Naive thymus-derived CD4-positive, alpha-beta T cell (primary cell): ENCODE measurements at regions of chr9 and their contacts with region 1.

Region 1: DNA sequence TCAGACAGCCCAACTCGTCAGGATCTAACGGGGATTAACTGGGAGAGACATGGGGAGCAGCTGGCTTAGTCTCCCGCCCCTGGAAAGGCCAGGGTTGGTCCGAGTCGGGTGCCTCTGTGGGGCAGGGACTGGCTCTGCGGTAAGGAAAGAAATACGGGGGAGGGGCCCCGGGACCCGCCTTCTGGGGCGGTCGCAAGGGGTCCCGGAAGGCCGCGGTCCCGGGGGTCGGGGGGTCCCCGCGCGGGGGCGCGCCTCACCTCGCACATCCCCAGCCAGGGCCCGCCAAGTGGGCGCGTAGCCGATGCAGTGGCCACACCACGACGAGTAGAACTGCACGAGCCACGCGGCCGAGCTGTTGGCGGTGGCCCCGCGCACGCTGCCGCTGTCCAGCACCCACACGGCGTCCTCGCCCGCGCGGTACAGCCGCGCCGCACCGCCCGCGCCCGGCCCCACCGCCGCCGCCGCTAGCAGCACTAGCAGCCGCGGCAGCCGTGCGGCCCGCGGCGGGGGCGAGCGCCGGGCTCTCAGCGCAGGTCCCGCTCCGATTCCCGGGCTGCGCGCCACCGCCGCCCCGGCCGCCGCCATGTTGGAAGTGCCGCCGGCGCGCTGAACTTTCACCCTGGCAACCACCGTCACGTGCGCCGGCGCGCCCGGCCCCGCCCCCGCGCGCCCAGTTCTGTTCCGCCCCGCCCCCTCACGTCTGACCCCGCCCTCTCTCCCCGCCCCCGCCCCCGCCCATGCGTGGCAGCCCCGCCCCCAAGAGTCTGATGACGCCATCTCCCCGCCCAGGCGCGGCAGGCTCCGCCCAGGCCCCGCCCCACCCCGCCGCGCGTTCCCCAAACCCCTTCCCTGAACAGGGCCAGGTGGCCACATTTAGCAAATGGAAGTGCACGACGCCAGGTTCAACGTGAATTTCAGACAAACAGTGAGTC is at the start of gene QSOX2:
- DNase-seq: peak; percentile 76 to 89 (median 82)
- ATAC-seq: peak; percentile 94
- H3K4me3 ChIP-seq: peak within 1 kb of the TSS; percentile 65
- H3K4me3 Mint-ChIP-seq: peak within 1 kb of the TSS; percentile 89 to 100 (median 94)
- H3K27ac ChIP-seq: peak within 1 kb of the TSS; percentile 65
- H3K27ac Mint-ChIP-seq: peak within 1 kb of the TSS; percentile 83 to 93 (median 88)
- H3K4me1 ChIP-seq: peaks cover 22 to 29% of the 10 kb centered on the region in 2 donors
- H3K4me1 Mint-ChIP-seq: peaks cover 25 to 45% (median 36%) of the 10 kb centered on the region in 7 donors
- H3K27me3 ChIP-seq: no peaks in the 10 kb centered on the region
- H3K27me3 Mint-ChIP-seq: peaks cover 0 to 2% (median 0%) of the 10 kb centered on the region in 5 donors
- total RNA-seq, gene QSOX2: 11.5 to 15.9 (median 12.0) TPM

Region 2: GRCh38 chr9:135907431-135908092 is 337.9 kb before region 1 on chr9 and contains the start of gene CAMSAP1:
- CTCF ChIA-PET with region 1: no interaction called
- POLR2A ChIA-PET with region 1: no interaction called
- intact Hi-C with region 1: loop called in 1 of 2 experiments (anchors 1 kb)
- DNase-seq: peak; percentile 89 to 97 (median 93)
- ATAC-seq: peak; percentile 91
- H3K4me3 ChIP-seq: peak within 1 kb of the TSS; percentile 69
- H3K4me3 Mint-ChIP-seq: peak within 1 kb of the TSS; percentile 85 to 94 (median 90)
- H3K27ac ChIP-seq: peak within 1 kb of the TSS; percentile 89
- H3K27ac Mint-ChIP-seq: peak within 1 kb of the TSS; percentile 68 to 92 (median 83)
- H3K4me1 ChIP-seq: peaks cover 21% of the 10 kb centered on the region in 2 donors
- H3K4me1 Mint-ChIP-seq: peaks cover 33 to 74% (median 63%) of the 10 kb centered on the region in 7 donors
- H3K27me3 ChIP-seq: no peaks in the 10 kb centered on the region
- H3K27me3 Mint-ChIP-seq: no peaks in the 10 kb centered on the region
- total RNA-seq, gene CAMSAP1: 16.4 to 34.3 (median 23.6) TPM

Region 3: GRCh38 chr9:135992486-135993408 is 252.7 kb before region 1 on chr9:
- CTCF ChIA-PET with region 1: no interaction called
- POLR2A ChIA-PET with region 1: no interaction called
- intact Hi-C with region 1: loop called in 1 of 2 experiments (anchors 5 kb)
- DNase-seq: peak in 6 of 9 donors; percentile 19 to 35 (median 24)
- ATAC-seq: peak; percentile 73
- H3K4me3 ChIP-seq: no peak overlapping the region
- H3K4me3 Mint-ChIP-seq: peak overlapping the region in 8 of 10 donors; percentile 11 to 68 (median 47)
- H3K27ac ChIP-seq: peak overlapping the region; percentile 35
- H3K27ac Mint-ChIP-seq: peak overlapping the region in 4 of 9 donors; percentile 52 to 82 (median 58)
- H3K4me1 ChIP-seq: peaks cover 14 to 17% of the 10 kb centered on the region in 2 donors
- H3K4me1 Mint-ChIP-seq: peaks cover 4 to 34% (median 12%) of the 10 kb centered on the region in 7 donors
- H3K27me3 ChIP-seq: no peaks in the 10 kb centered on the region
- H3K27me3 Mint-ChIP-seq: no peaks in the 10 kb centered on the region

Region 4: GRCh38 chr9:136051517-136052432 is 193.7 kb before region 1 on chr9:
- CTCF ChIA-PET with region 1: no interaction called
- POLR2A ChIA-PET with region 1: no interaction called
- intact Hi-C with region 1: no loop called
- DNase-seq: no peak
- ATAC-seq: peak; percentile 61
- H3K4me3 ChIP-seq: peak overlapping the region; percentile 50
- H3K4me3 Mint-ChIP-seq: peak overlapping the region in 9 of 10 donors; percentile 41 to 82 (median 76)
- H3K27ac ChIP-seq: no peak overlapping the region
- H3K27ac Mint-ChIP-seq: no peak overlapping the region
- H3K4me1 ChIP-seq: peaks cover 9% of the 10 kb centered on the region in 2 donors
- H3K4me1 Mint-ChIP-seq: peaks cover 3 to 25% (median 10%) of the 10 kb centered on the region in 7 donors
- H3K27me3 ChIP-seq: peaks cover 0 to 6% of the 10 kb centered on the region in 2 donors
- H3K27me3 Mint-ChIP-seq: peaks cover 0 to 14% (median 4%) of the 10 kb centered on the region in 5 donors

Region 5: GRCh38 chr9:136118320-136119060 is 127.0 kb before region 1 on chr9 and contains the start of gene TMEM250:
- CTCF ChIA-PET with region 1: no interaction called
- POLR2A ChIA-PET with region 1: no interaction called
- intact Hi-C with region 1: loop called in 1 of 2 experiments (anchors 2 kb)
- DNase-seq: peak; percentile 94 to 98 (median 97)
- ATAC-seq: peak; percentile 94
- H3K4me3 ChIP-seq: peak within 1 kb of the TSS; percentile 81
- H3K4me3 Mint-ChIP-seq: peak within 1 kb of the TSS; percentile 73 to 87 (median 84)
- H3K27ac ChIP-seq: peak within 1 kb of the TSS; percentile 87
- H3K27ac Mint-ChIP-seq: peak within 1 kb of the TSS; percentile 13 to 91 (median 84)
- H3K4me1 ChIP-seq: peaks cover 14 to 33% of the 10 kb centered on the region in 2 donors
- H3K4me1 Mint-ChIP-seq: peaks cover 3 to 26% (median 11%) of the 10 kb centered on the region in 7 donors
- H3K27me3 ChIP-seq: no peaks in the 10 kb centered on the region
- H3K27me3 Mint-ChIP-seq: no peaks in the 10 kb centered on the region
- total RNA-seq, gene TMEM250: 16.4 to 55.3 (median 41.3) TPM

Region 6: GRCh38 chr9:136231478-136232297 is 13.8 kb before region 1 on chr9:
- CTCF ChIA-PET with region 1: no interaction called
- POLR2A ChIA-PET with region 1: no interaction called
- intact Hi-C with region 1: loop called (anchors 1 kb)
- DNase-seq: peak in 7 of 9 donors; percentile 30 to 64 (median 53)
- ATAC-seq: peak; percentile 82
- H3K4me3 ChIP-seq: no peak overlapping the region
- H3K4me3 Mint-ChIP-seq: peak overlapping the region; percentile 59 to 86 (median 78)
- H3K27ac ChIP-seq: peak overlapping the region; percentile 64
- H3K27ac Mint-ChIP-seq: peak overlapping the region; percentile 74 to 95 (median 86)
- H3K4me1 ChIP-seq: peaks cover 0 to 9% of the 10 kb centered on the region in 2 donors
- H3K4me1 Mint-ChIP-seq: peaks cover 30 to 59% (median 44%) of the 10 kb centered on the region in 7 donors
- H3K27me3 ChIP-seq: no peaks in the 10 kb centered on the region
- H3K27me3 Mint-ChIP-seq: no peaks in the 10 kb centered on the region

Region 7: DNA sequence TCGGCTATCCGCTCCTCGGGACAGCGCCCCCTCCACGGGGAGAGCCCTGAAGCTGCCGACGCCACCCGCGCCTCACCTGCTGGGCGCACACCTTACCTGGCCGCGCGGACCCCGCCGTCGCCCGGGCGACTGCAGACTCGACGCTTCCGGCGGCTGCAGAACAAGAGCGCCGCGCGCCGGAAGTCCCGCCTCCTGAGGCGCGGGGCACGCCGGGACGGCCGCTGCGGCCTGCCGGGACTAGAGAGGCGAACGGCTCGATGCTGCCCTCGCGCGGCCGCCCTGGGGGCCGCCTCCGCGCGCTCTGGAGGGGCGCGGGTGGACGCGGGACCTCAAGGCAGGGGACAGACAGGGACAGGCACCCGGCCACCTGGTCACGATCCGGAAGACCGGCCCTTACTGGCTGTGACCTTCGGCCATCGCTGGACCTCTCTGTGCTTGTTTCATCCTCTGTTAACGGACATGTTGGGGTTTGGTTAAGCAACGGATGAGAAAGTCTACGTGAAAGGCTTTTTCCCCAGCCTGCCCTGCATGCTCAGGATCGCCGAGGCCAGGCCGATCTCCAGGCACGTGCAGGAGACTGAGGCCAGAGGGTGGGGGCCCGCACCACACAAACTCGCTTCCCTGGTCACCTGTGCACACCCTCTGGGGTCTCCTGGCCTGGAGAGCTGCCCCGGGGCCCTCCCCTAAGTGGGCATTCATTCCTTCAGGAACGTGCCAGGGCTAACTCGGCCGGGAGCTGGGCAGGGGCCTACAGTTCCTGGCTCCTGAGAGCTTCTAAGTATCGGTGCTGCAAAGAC is 154.8 kb after region 1 on chr9 and contains the start of gene SNAPC4:
- CTCF ChIA-PET with region 1: no interaction called
- POLR2A ChIA-PET with region 1: no interaction called
- intact Hi-C with region 1: loop called in 1 of 2 experiments (anchors 2 kb)
- DNase-seq: peak; percentile 77 to 93 (median 87)
- ATAC-seq: peak; percentile 91
- H3K4me3 ChIP-seq: peak within 1 kb of the TSS; percentile 62
- H3K4me3 Mint-ChIP-seq: peak within 1 kb of the TSS; percentile 83 to 90 (median 86)
- H3K27ac ChIP-seq: peak within 1 kb of the TSS; percentile 62
- H3K27ac Mint-ChIP-seq: peak within 1 kb of the TSS in 8 of 9 donors; percentile 26 to 78 (median 76)
- H3K4me1 ChIP-seq: peaks cover 33 to 38% of the 10 kb centered on the region in 2 donors
- H3K4me1 Mint-ChIP-seq: peaks cover 30 to 61% (median 45%) of the 10 kb centered on the region in 7 donors
- H3K27me3 ChIP-seq: no peaks in the 10 kb centered on the region
- H3K27me3 Mint-ChIP-seq: no peaks in the 10 kb centered on the region
- total RNA-seq, gene SNAPC4: 10.0 to 16.3 (median 12.8) TPM

Region 8: DNA sequence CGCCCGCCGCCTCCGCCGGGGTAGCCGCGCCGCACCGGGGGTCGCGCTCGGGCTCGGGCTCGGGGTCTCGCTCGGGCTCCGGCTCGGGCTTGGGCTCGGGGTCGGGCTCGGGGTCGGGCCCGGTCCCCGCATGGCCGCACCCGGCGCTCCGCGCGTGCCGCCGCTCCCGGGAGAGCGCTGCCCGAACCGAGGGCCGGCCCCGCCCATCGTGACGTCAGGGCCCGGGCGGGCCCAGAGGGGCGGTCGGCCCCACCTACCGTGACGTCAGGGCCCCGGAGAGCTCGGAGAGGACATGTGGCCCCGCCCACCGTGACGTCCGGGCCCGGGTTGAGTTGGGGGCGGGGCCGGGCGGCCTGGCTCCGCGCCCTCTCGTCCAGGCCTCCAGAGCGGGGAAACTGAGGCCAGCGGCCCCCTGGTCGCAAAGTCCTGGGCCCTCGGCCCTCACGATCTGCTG is 1213.7 kb after region 1 on chr9 and contains the start of gene NSMF:
- CTCF ChIA-PET with region 1: no interaction called
- POLR2A ChIA-PET with region 1: no interaction called
- intact Hi-C with region 1: loop called in 1 of 2 experiments (anchors 10 kb)
- DNase-seq: peak; percentile 90 to 99 (median 95)
- ATAC-seq: peak; percentile 89
- H3K4me3 ChIP-seq: peak within 1 kb of the TSS; percentile 67
- H3K4me3 Mint-ChIP-seq: peak within 1 kb of the TSS; percentile 55 to 79 (median 68)
- H3K27ac ChIP-seq: peak within 1 kb of the TSS; percentile 93
- H3K27ac Mint-ChIP-seq: peak within 1 kb of the TSS; percentile 28 to 98 (median 91)
- H3K4me1 ChIP-seq: peaks cover 36 to 54% of the 10 kb centered on the region in 2 donors
- H3K4me1 Mint-ChIP-seq: peaks cover 0 to 55% (median 33%) of the 10 kb centered on the region in 7 donors
- H3K27me3 ChIP-seq: no peaks in the 10 kb centered on the region
- H3K27me3 Mint-ChIP-seq: no peaks in the 10 kb centered on the region
- total RNA-seq, gene NSMF: 22.9 to 92.0 (median 57.3) TPM